H1 (cell line): ENCODE measurements at regions of chrX and their contacts with region 1.

Region 1: DNA sequence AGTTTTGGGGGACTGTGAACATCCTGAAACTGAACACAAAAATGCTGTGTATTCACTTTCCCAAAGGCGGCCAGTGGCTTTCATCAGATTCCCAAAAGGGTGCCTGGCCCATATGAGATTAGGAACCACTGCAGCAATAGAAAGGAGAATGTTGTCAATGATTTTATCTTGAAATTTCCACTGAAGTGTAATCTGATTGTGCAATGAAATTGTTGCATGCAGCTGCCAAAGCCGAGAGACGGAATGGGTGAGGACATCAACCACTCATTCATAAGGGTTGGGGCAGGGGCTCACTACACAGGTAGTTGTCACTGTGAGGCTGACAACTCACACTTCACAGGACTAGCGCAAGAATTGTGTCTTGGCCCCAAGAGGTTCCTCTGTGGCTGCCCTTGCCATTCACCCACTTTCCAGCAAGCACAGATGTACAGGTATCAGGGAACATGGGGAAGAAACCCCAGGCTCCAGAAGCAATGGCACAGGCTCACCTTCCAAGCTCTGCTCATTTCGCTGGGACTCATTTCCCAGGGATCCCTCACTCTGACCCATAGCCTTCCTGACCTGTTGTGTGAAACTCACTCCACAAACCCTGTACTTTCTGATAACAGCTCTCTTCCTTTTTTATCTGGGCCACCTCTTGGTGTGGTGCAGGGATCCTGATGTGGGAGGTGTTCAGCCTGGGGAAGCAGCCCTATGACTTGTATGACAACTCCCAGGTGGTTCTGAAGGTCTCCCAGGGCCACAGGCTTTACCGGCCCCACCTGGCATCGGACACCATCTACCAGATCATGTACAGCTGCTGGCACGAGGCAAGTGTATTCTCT is 48.8 kb downstream of the BMX start:
- DNase-seq: no peak
- H3K4me3 ChIP-seq: no peak overlapping the region
- H3K27ac ChIP-seq: no peak overlapping the region
- H3K4me1 ChIP-seq: no peaks in the 10 kb centered on the region
- H3K27me3 ChIP-seq: no peaks in the 10 kb centered on the region
- CTCF ChIP-seq: no peak
- EP300 ChIP-seq: no peak
- POLR2A ChIP-seq: no peak
- RAD21 ChIP-seq: no peak

Region 2: GRCh38 chrX:15511563-15511962 is 37.8 kb before region 1 on chrX:
- CTCF ChIA-PET with region 1: no interaction called
- POLR2A ChIA-PET with region 1: no interaction called
- DNase-seq: no peak
- H3K4me3 ChIP-seq: no peak overlapping the region
- H3K27ac ChIP-seq: no peak overlapping the region
- H3K4me1 ChIP-seq: no peaks in the 10 kb centered on the region
- H3K27me3 ChIP-seq: no peaks in the 10 kb centered on the region
- CTCF ChIP-seq: no peak
- EP300 ChIP-seq: no peak
- POLR2A ChIP-seq: no peak
- RAD21 ChIP-seq: no peak

Region 3: DNA sequence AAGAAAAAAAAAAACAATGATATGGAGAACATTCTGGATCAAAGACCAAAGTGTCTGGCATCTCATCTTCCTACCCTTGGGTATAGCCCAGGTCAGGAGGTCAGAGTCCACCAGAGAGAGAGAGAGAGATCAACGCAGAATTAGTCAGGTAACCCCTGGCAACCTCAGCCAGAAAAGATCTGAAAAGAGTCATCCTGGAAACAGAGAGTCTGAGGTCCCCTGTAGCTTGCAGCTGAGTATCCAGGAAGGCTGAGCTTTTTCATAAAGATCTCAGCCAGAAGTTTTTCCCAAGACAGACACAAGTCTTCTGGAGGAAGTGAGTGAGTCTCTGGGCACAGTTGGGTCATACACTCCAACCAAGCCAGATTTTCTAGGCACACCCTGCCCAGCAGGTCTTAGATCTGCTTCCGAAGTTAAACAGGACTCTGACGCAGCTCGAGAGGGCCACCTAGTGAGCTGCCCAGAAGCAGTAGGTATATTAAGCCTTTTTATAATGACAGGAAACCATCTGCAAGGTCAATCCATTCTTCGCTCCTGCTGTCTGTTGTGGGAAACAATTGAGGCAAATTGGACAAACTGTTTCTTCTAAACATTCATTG is 15.7 kb after region 1 on chrX:
- CTCF ChIA-PET with region 1: interaction called, 10 read pairs
- POLR2A ChIA-PET with region 1: no interaction called
- DNase-seq: peak; percentile 3 to 46
- H3K4me3 ChIP-seq: no peak overlapping the region
- H3K27ac ChIP-seq: no peak overlapping the region
- H3K4me1 ChIP-seq: 0 out of 7 replicates have a peak, but pooled peaks cover 0 to 3% (median 0%) of the 10 kb centered on the region in 4 experiments
- H3K27me3 ChIP-seq: no peaks in the 10 kb centered on the region
- CTCF ChIP-seq: peak; percentile 17 to 64 (median 60)
- EP300 ChIP-seq: no peak
- POLR2A ChIP-seq: no peak
- RAD21 ChIP-seq: peak; percentile 76 to 80